ENCODE measurements at regions of chr1 and their contacts with region 1.

Region 1: DNA sequence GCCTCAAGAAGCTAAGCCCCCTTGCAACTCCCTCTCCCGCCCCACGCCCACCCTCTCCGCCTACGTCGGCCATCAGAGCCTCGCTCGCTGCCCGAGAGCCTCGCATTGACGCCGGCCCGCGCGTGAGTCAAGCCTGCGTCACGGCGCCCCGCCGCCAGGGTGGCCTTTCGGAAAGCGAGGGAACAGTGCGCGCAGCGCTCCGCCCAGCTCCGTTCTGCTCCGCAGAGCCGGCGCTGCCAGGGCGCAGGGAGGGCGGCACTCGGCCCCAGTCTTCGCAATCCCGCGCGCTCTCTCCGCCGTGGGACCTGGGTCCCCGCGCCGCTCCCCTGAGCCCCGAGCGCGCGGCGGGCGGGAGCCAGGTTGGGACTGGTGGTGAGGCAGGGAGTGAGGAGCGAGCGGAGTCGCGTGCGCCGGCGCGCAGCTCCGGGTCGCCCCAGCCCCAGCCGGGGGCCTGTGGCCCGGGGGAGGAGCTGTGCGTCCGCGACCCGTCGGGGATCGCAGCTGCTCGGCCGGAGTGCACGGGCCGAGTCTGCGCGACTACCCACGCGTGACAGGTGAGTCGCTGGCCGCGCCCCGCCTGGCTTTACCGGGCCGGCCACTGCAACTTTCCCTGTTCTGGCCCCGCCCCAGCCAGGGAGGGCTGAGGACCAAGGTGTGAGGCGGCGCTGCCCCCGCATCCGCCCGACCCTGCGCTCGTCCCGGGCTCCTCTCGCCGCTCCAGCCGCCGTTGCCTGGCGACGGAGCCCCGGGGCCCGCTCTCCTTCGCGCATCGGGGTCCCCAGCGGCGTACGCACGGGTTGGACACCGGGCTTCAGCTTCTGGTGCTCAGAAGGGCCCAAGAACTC is at the start of gene SLC6A17:
- DNase-seq: peak; percentile 63
- ATAC-seq: peak; percentile 76
- H3K4me3 Mint-ChIP-seq: peak within 1 kb of the TSS; percentile 60
- H3K27ac Mint-ChIP-seq: no peak within 1 kb of the TSS
- H3K4me1 Mint-ChIP-seq: peaks cover 6% of the 10 kb centered on the region
- H3K27me3 Mint-ChIP-seq: peaks cover 47% of the 10 kb centered on the region
- CTCF ChIP-seq: no peak
- total RNA-seq, gene SLC6A17: 0.09 to 0.24 TPM (median 0.16 TPM) in 3 replicates

Region 2: DNA sequence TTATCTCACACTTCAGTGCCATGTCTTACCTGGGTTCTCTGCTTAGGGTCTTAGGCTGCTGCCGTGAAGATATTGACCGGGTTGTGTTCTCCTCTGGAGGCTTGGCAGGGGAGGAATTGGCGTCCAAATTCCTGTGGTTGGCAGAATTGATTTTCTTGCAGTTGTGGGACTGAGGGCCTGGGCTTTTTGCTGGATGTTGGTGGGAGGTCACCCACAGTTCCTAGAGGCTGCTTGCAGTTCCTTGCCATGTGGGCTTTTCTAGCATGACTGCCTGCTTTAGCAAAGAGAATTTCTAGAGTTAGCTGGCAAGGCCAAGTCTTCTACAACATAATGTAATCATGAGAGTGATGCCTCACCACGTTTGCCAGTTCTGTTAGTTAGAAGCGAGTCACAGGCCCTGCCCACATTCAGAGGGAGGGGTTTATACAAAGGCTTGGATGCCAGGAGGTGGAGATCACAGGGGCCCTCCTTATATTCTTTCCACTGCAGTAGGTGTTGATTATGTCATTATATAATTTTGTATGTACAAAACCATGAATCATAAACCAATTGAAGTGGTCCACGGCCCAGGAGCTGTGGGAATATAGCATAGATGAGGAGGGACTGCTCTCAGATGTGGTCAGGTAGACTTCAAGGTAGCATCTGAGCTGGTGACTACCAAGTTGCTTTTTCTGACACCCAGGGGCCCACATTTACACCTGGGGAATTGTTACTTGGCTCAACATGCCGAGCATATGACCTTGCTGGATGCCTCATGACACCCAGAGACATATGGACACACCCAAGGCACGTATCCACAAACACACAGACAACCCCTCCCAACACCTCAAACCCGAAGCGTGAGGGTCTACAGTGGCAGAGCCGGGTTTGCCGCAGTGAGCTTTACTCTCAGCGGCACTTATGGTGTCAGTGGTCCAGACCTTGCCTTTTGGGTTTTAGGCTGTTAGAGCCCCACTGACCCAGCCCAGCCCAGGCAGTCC is 31.6 kb before region 1 on chr1:
- CTCF ChIA-PET with region 1: interaction called, 10 read pairs
- POLR2A ChIA-PET with region 1: no interaction called
- DNase-seq: no peak
- ATAC-seq: no peak
- H3K4me3 Mint-ChIP-seq: no peak overlapping the region
- H3K27ac Mint-ChIP-seq: no peak overlapping the region
- H3K4me1 Mint-ChIP-seq: 0 out of 2 replicates have a peak, but pooled peaks cover 4% of the 10 kb centered on the region
- H3K27me3 Mint-ChIP-seq: peaks cover 15% of the 10 kb centered on the region
- CTCF ChIP-seq: no peak

Region 3: DNA sequence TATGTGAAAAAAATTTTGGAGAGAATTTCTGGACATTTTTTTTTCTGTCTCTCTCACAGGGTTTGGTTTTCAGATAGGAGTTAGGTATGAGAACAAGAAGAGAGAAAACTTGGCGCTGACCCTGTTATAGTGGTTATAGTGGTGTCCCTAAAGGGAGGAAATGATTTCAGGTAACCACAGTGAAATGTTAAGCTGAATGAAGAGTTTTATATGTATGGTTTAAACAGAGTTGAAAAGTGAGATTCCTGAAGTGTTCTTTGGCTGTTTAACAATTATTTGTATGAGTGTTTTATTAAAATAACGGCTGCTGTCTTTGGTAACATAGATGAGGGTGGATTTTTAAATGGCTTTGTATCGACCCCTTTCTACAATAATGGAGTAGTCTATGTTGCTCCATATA is 194.9 kb after region 1 on chr1:
- CTCF ChIA-PET with region 1: no interaction called
- POLR2A ChIA-PET with region 1: no interaction called
- DNase-seq: no peak
- ATAC-seq: no peak
- H3K4me3 Mint-ChIP-seq: peak overlapping the region; percentile 38
- H3K27ac Mint-ChIP-seq: peak overlapping the region; percentile 7; the same call in 1 of the 2 replicates
- H3K4me1 Mint-ChIP-seq: peaks cover 85% of the 10 kb centered on the region
- H3K27me3 Mint-ChIP-seq: no peaks in the 10 kb centered on the region
- CTCF ChIP-seq: no peak

Region 4: DNA sequence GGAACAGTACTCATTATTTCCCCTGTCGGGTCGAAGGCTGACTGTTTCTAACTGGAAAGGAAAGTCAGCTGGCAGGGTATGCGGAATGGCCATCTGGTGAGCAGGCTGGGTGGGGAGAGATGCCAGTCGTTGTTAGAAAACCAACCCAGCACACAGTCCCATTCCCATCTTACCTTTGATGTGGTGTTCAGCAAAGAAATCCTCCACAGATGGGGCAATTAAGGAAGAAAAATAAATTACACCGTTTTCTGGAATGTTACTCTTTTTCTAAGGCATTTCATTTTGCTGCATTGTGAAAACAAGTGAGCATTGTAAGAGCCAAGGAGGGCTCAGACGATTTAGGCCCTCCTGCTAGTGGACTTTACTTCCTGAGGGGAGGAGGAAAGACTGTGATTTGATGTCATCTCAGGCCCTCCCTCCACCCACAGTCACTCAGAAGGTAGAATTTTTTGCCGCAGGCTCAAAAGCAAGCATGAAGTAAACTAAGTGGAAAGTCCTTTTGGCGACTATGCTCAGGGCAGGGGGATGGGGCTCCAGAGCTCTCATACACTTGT is 240.2 kb after region 1 on chr1 and contains the start of gene SLC16A4:
- CTCF ChIA-PET with region 1: no interaction called
- POLR2A ChIA-PET with region 1: no interaction called
- DNase-seq: no peak
- ATAC-seq: peak; percentile 73
- H3K4me3 Mint-ChIP-seq: no peak within 1 kb of the TSS
- H3K27ac Mint-ChIP-seq: peak within 1 kb of the TSS; percentile 75
- H3K4me1 Mint-ChIP-seq: peaks cover 18% of the 10 kb centered on the region
- H3K27me3 Mint-ChIP-seq: no peaks in the 10 kb centered on the region
- CTCF ChIP-seq: no peak
- total RNA-seq, gene SLC16A4: 0.11 to 0.30 TPM (median 0.28 TPM) in 3 replicates

Region 5: DNA sequence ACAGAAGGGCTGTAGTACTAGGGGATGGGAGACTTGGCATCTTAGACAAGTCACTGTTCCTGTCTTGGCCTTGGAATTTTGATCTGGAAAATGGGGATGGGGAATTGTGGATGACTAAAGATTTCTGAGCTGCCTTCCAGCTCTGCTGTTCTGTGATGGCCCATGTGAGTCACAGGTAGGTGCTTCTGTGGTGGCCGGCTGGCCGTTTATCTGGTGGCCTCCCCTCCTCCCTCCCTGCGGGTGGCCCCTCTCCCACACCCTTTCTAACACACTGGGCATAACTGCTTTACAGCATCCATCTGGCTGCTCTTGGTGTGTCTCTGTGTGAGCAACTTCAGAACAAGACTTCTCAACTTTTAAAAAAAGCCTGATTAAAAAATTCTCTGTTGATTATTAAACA is 419.8 kb after region 1 on chr1:
- CTCF ChIA-PET with region 1: no interaction called
- POLR2A ChIA-PET with region 1: no interaction called
- DNase-seq: no peak
- ATAC-seq: no peak
- H3K4me3 Mint-ChIP-seq: no peak overlapping the region
- H3K27ac Mint-ChIP-seq: no peak overlapping the region
- H3K4me1 Mint-ChIP-seq: peaks cover 14% of the 10 kb centered on the region
- H3K27me3 Mint-ChIP-seq: peaks cover 53% of the 10 kb centered on the region
- CTCF ChIP-seq: no peak